ENCODE measurements at regions of chr1 and their contacts with region 1.

Region 1: GRCh38 chr1:156689035-156689952 is 12.1 kb upstream of the NES start:
- DNase-seq: peak; percentile 88
- ATAC-seq: peak; percentile 96
- H3K4me3 Mint-ChIP-seq: peak overlapping the region; percentile 6
- H3K27ac Mint-ChIP-seq: no peak overlapping the region
- H3K4me1 Mint-ChIP-seq: peaks cover 29% of the 10 kb centered on the region
- H3K27me3 Mint-ChIP-seq: peaks cover 48% of the 10 kb centered on the region

Region 2: DNA sequence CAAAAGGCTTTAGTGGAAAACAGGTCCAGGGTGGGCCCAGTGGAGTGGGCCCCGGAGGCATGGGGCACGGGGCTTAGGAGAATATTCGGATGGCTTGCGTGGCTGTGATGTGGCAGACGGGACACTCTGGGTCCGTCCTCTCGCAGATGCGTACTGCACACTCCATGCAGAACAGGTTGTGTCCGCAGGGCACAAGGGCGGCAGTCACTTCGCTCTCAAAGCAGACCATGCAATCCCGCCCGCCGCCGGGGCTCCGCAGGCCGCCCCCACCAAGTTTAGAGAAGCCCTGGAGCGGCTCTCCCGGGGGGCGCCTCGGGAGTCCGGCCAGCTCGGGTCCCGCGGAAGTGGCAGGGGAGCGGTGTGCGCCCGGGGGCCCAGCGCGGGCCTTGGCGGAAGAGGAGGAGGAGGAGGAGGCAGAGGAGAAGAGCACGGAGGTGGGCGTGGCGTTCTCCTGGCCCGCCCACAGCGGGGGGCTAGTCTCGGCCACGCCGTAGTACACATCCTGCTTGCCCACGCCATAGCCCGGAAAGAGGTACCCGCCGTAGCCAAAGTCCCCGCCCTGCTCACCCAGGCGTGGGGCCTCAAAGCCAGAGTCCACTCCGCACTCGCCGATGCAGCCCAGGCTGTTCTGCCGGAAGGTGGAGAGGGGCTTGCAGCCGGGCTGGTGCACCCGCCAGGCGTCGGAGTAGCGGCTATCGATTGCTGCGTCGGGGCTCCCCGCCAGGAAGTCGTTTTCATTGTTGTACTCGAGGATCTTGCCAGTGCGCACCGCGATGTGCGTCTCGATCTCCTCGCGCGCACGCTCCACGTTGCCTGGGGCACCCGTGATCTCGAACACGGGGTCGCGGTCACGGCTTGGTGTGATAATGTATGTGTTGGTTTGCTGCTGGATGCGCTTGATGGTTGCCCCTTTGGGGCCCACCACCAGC is 612.5 kb before region 1 on chr1:
- CTCF ChIA-PET with region 1: no interaction called
- POLR2A ChIA-PET with region 1: no interaction called
- intact Hi-C with region 1: no loop called
- DNase-seq: no peak
- ATAC-seq: no peak
- H3K4me3 Mint-ChIP-seq: no peak overlapping the region
- H3K27ac Mint-ChIP-seq: no peak overlapping the region
- H3K4me1 Mint-ChIP-seq: no peaks in the 10 kb centered on the region
- H3K27me3 Mint-ChIP-seq: peaks cover 5% of the 10 kb centered on the region

Region 3: DNA sequence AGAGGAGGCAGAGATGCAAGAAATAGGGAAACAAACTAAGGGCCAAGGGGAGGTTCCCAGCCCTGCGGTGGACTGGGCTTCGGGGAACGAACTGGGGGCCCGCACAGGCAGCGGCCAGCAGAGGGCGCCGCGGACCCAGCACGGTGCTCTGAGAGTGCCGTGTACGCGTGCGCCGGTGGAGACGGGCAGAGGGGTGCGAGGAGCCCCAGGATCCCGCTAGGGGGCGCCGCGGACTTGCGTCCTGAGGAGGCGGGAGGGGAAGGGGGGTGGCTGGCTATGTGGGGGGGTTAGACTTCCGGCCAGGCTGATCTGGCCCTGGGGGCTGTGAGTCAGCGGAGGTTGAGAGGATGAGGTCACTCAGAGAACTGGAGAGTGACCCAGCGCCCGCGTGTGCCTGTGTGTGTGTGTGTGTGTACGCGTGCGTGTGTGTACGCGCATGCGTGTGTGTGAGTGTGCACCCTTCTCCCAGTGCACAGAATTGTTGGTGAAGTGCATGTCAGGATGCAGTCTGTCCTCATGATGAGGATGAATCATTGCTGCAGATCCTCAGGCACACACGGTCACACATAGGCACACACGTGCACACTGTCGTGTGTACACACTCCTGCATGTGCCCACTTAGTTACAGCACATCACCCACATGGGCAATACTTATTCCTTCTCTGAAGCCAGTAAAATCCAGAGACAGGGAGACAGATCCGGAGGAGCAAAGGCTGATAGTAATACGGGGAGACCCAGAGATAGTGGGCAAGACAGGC is 29.1 kb before region 1 on chr1:
- CTCF ChIA-PET with region 1: interaction called, 19 read pairs
- POLR2A ChIA-PET with region 1: no interaction called
- intact Hi-C with region 1: no loop called
- DNase-seq: peak; percentile 98
- ATAC-seq: peak; percentile 88
- H3K4me3 Mint-ChIP-seq: peak overlapping the region; percentile 80
- H3K27ac Mint-ChIP-seq: peak overlapping the region; percentile 74
- H3K4me1 Mint-ChIP-seq: peaks cover 48% of the 10 kb centered on the region
- H3K27me3 Mint-ChIP-seq: peaks cover 27% of the 10 kb centered on the region

Region 4: DNA sequence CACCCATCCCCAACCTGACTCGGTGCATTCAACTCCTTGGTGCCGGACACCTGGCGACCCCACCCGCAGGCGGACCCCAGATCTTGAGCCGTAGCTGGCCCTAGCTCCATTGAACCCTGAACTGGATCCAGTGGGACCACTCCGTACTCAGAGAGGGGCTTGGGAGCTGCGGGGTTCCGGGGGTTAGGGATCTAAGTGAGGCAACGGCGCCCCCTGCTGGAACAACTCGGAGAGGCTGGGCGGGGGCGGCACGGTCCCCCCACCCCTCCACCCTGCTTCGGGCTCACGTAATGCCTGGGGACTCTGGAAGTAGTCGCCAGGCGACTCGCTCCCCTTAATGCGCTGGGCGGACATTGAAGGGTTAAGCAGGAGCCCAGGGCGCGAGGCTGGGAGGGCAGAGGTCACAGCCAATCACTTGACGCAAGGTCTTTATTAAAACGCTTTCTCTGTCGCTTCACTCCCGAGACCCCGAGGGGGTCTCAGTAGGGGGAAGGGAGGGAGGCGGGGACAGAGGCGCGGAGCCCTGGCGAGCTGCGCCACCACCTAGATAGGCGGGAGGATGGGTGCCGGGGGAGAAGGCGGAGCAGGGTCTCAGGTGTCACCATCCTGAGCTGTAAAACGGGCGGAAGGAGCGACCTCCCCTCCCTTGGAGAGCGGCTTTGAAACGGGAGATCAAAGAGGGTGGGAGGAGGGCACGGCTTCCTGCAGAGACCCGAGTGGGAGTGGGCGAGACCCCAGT is 16.8 kb after region 1 on chr1:
- CTCF ChIA-PET with region 1: interaction called, 186 read pairs
- POLR2A ChIA-PET with region 1: interaction called, 3 read pairs
- intact Hi-C with region 1: loop called (anchors 1 kb)
- DNase-seq: peak; percentile 88
- ATAC-seq: peak; percentile 80
- H3K4me3 Mint-ChIP-seq: peak overlapping the region; percentile 71
- H3K27ac Mint-ChIP-seq: peak overlapping the region; percentile 58
- H3K4me1 Mint-ChIP-seq: peaks cover 24% of the 10 kb centered on the region
- H3K27me3 Mint-ChIP-seq: peaks cover 20% of the 10 kb centered on the region

Region 5: DNA sequence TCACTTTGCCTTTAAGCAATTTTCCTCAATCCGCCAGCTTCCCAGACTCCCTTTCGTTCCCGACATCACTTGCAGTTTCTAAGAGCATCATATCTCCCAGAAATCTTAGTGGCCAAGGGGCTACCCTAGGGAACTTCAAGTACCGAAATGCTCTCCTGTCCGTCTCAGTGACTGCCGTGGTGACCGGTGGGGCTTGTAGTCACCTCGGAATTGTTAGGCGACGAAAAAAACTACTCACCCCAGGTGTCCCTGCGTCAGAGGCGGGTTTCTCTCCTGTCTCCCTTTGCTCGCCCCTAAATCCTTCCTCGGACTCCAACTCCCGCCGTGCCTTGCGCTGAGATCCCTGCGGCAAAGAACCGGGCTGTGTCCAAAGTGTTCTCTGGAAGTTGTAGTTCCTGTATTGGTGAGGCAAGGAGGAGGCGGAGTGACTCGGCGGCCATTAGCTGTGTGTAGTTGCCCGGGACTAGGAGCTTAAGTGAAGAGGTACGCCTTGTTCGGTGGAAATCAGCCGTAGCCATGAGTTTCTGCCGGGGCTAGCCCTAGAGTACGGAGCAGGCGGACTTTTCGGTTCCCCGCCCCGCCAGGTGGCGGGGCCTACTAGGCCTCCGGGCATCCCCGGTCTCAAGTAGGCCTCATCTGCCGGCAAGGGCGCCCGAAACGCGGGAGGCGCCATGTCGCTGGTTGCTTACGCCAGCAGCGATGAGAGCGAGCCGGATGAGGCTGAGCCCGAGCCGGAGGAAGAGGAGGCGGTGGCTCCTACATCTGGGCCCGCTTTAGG is 78.0 kb after region 1 on chr1 and contains the start of gene PRCC:
- CTCF ChIA-PET with region 1: interaction called, 7 read pairs
- POLR2A ChIA-PET with region 1: interaction called, 6 read pairs
- intact Hi-C with region 1: loop called in 1 of 2 experiments (anchors 5 kb)
- DNase-seq: peak; percentile 98
- ATAC-seq: peak; percentile 96
- H3K4me3 Mint-ChIP-seq: no peak within 1 kb of the TSS
- H3K27ac Mint-ChIP-seq: no peak within 1 kb of the TSS
- H3K4me1 Mint-ChIP-seq: peaks cover 35% of the 10 kb centered on the region
- H3K27me3 Mint-ChIP-seq: no peaks in the 10 kb centered on the region
- total RNA-seq, gene PRCC: 80.4 to 110 TPM

Region 6: DNA sequence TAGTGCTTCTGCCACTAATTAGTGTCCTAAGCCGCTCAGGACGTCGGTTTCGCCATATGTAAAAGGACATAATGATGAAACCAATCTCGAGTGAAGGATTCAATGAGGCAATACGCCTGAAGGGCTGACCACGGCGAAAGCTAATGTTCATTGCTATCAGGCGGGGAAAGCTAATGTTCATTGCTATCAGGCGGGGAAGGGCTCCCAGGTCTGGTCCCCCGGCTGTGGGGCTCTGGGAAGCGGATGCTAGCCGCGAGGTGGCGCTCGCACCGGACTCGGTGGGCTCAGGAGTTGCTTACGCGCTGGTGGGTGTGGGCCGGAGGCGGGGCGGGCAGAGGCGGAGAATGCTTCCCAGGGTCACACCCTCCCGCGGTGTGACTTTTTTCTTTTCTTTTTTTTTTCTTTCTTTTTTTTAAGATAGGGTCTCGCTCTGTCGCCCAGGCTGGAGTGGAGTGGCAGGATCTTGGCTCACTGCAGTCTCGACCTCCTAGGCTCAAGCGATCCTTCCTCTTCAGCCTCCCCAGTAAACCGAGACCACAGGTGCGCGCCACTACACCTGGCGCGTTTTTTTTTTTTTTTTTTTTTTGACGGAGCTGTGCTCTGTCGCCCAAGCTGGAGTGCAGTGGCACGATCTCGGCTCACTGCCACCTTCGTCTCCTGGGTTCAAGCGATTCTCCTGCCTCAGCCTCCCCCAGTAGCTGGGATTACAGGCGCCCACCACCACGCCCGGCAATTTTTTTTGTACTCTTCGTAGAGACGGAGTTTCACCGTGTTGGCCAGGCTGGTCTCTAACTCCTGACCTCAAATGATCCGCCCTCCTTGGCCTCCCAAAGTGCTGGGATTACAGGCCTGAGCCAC is 203.1 kb after region 1 on chr1:
- CTCF ChIA-PET with region 1: interaction called, 31 read pairs
- POLR2A ChIA-PET with region 1: no interaction called
- intact Hi-C with region 1: loop called in 1 of 2 experiments (anchors 1 kb)
- DNase-seq: peak; percentile 95
- ATAC-seq: peak; percentile 97
- H3K4me3 Mint-ChIP-seq: peak overlapping the region; percentile 55
- H3K27ac Mint-ChIP-seq: no peak overlapping the region
- H3K4me1 Mint-ChIP-seq: peaks cover 14% of the 10 kb centered on the region
- H3K27me3 Mint-ChIP-seq: peaks cover 39% of the 10 kb centered on the region

Region 7: GRCh38 chr1:156927215-156928042 is 238.1 kb after region 1 on chr1:
- CTCF ChIA-PET with region 1: interaction called, 7 read pairs
- POLR2A ChIA-PET with region 1: no interaction called
- intact Hi-C with region 1: loop called in 1 of 2 experiments (anchors 5 kb)
- DNase-seq: peak; percentile 87
- ATAC-seq: peak; percentile 76
- H3K4me3 Mint-ChIP-seq: no peak overlapping the region
- H3K27ac Mint-ChIP-seq: no peak overlapping the region
- H3K4me1 Mint-ChIP-seq: peaks cover 25% of the 10 kb centered on the region
- H3K27me3 Mint-ChIP-seq: peaks cover 64% of the 10 kb centered on the region

Measured in activated CD4-positive, alpha-beta T cell treated with anti-CD3 and anti-CD28 coated beads for 36 hours (primary cell).